ENCODE measurements at regions of chr4 and their contacts with region 1.

Region 1: DNA sequence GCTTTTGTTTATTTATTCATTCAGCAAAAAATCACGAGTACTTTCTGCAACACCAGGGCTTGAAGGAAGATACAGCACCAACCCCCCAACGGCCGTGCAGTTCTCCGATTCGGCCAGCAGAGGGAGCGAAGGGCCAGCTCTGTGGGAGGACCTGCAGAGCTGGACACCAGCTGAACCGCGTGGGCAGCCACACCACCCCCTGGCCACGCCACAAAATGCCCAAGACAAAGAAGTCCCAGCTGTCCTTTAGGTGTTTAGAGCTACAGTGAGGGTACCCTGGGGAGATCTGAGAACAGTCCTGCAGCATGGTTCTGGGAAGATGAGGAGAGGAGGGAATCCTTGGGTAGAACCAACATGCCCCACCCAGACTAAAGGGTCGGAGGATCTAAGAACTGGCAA is 83.1 kb downstream of the RELL1 start:
- DNase-seq: peak; percentile 87
- H3K4me3 ChIP-seq: no peak overlapping the region
- H3K27ac ChIP-seq: no peak overlapping the region
- H3K4me1 ChIP-seq: peaks cover 0 to 19% (median 12%) of the 10 kb centered on the region in 4 donors
- H3K27me3 ChIP-seq: no peaks in the 10 kb centered on the region
- CTCF ChIP-seq: peak; percentile 97 to 99 (median 98)
- EP300 ChIP-seq: no peak
- POLR2A ChIP-seq: no peak

Region 2: DNA sequence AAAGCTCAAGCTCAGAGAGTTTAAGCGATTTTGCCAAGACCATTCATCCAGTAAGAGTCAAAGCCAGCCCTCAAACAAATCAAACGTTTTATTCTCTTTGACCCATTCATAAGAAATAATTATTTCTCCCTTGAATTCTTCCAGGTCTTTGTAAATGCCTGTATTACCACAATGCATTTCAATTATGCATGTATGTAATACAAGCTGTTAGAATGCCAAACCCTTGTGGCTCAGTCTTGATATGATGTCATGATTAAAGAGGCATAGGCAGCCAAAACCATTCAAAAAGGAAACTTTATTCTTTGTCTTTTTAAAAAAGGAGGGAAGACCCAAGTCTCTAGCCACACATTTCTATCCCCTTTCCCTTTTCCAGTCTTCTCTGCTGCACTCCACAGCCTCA is 166.9 kb after region 1 on chr4:
- in situ Hi-C with region 1: loop called in 1 of 4 experiments (anchors 10 kb)
- intact Hi-C with region 1: no loop called
- DNase-seq: no peak
- H3K4me3 ChIP-seq: no peak overlapping the region
- H3K27ac ChIP-seq: no peak overlapping the region
- H3K4me1 ChIP-seq: no peaks in the 10 kb centered on the region
- H3K27me3 ChIP-seq: no peaks in the 10 kb centered on the region
- CTCF ChIP-seq: no peak
- EP300 ChIP-seq: no peak
- POLR2A ChIP-seq: no peak

Region 3: GRCh38 chr4:37793562-37793961 is 190.5 kb after region 1 on chr4:
- in situ Hi-C with region 1: loop called in 2 of 4 experiments (anchors 5 to 10 kb)
- intact Hi-C with region 1: loop called (anchors 10 kb)
- DNase-seq: no peak
- H3K4me3 ChIP-seq: no peak overlapping the region
- H3K27ac ChIP-seq: no peak overlapping the region
- H3K4me1 ChIP-seq: no peaks in the 10 kb centered on the region
- H3K27me3 ChIP-seq: no peaks in the 10 kb centered on the region
- CTCF ChIP-seq: peak; percentile 34 to 48 (median 40)
- EP300 ChIP-seq: no peak
- POLR2A ChIP-seq: no peak

Region 4: DNA sequence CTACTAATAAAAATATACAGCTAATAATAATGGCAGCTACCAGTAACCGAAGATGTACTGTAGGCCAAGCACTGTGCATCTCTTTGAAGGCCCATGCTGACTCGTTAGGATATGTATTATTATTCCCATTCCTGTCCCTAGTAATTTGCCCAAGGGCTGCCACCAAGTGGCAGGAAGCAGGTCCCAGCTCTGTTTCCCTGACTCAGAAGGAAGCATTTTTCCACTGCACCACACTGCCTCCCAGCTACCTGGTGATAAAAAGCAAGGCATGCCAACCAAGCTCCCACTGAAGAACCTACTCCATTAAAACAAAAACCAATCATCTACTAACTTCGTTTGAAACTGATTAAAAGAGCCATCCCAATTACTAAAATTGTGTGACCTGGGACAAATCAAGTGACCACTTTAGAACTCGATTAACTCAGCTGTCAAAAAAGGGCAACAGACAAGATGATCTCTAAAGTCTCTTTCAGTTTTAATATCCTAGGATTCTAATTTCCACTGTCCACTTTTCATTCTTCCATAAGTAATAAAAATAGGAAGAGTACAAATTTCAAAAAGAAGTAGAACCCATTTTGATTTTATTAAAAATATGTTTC is 199.1 kb after region 1 on chr4:
- in situ Hi-C with region 1: loop called in 2 of 4 experiments (anchors 10 kb)
- intact Hi-C with region 1: loop called (anchors 10 kb)
- DNase-seq: peak; percentile 68
- H3K4me3 ChIP-seq: no peak overlapping the region
- H3K27ac ChIP-seq: no peak overlapping the region
- H3K4me1 ChIP-seq: no peaks in the 10 kb centered on the region
- H3K27me3 ChIP-seq: no peaks in the 10 kb centered on the region
- CTCF ChIP-seq: peak; percentile 39 to 88 (median 56)
- EP300 ChIP-seq: no peak
- POLR2A ChIP-seq: no peak

Region 5: GRCh38 chr4:38034986-38035882 is 432.2 kb after region 1 on chr4:
- in situ Hi-C with region 1: loop called in 3 of 4 experiments (anchors 10 to 25 kb)
- intact Hi-C with region 1: loop called (anchors 10 kb)
- DNase-seq: no peak
- H3K4me3 ChIP-seq: no peak overlapping the region
- H3K27ac ChIP-seq: peak overlapping the region in 3 of 4 donors; percentile 4 to 33 (median 17)
- H3K4me1 ChIP-seq: peaks cover 0 to 5% (median 2%) of the 10 kb centered on the region in 4 donors
- H3K27me3 ChIP-seq: no peaks in the 10 kb centered on the region
- CTCF ChIP-seq: peak; percentile 65 to 86 (median 68)
- EP300 ChIP-seq: no peak
- POLR2A ChIP-seq: no peak

Measured in transverse colon (tissue), 4 donors.